OCI-LY7 (cell line): ENCODE measurements at regions of chr9 and their contacts with region 1.

Region 1: GRCh38 chr9:4740638-4741364 is at the start of gene AK3:
- DNase-seq: peak; percentile 94
- H3K4me3 ChIP-seq: peak within 1 kb of the TSS; percentile 86
- H3K27ac ChIP-seq: peak within 1 kb of the TSS; percentile 61
- H3K4me1 ChIP-seq: peaks cover 23% of the 10 kb centered on the region
- CTCF ChIP-seq: peak; percentile 49
- total RNA-seq, gene AK3: 64.4 and 108 TPM in 2 replicates

Region 2: DNA sequence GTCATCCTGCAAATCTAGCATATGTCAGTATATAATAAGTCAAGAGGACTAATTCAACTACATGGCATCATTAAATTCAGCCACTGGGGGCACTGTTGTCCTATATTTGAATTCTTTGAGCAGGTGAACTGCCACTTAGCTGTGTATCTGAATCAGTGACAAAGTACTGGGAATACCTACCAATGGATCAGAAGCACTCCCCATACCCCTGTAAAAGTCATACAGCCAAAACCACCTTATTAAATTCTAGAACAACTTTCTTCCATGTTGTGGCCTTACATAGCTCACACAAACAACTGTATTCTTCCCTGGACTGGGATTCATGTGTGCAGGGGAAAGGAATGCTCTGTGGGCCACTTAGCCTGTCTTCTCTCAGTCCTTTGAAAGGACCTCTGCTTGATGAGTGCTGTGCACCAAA is 136.1 kb before region 1 on chr9:
- CTCF ChIA-PET with region 1: no interaction called
- POLR2A ChIA-PET with region 1: no interaction called
- intact Hi-C with region 1: loop called (anchors 5 kb)
- DNase-seq: peak; percentile 76
- H3K4me3 ChIP-seq: no peak overlapping the region
- H3K27ac ChIP-seq: no peak overlapping the region
- H3K4me1 ChIP-seq: no peaks in the 10 kb centered on the region
- CTCF ChIP-seq: peak; percentile 92

Region 3: DNA sequence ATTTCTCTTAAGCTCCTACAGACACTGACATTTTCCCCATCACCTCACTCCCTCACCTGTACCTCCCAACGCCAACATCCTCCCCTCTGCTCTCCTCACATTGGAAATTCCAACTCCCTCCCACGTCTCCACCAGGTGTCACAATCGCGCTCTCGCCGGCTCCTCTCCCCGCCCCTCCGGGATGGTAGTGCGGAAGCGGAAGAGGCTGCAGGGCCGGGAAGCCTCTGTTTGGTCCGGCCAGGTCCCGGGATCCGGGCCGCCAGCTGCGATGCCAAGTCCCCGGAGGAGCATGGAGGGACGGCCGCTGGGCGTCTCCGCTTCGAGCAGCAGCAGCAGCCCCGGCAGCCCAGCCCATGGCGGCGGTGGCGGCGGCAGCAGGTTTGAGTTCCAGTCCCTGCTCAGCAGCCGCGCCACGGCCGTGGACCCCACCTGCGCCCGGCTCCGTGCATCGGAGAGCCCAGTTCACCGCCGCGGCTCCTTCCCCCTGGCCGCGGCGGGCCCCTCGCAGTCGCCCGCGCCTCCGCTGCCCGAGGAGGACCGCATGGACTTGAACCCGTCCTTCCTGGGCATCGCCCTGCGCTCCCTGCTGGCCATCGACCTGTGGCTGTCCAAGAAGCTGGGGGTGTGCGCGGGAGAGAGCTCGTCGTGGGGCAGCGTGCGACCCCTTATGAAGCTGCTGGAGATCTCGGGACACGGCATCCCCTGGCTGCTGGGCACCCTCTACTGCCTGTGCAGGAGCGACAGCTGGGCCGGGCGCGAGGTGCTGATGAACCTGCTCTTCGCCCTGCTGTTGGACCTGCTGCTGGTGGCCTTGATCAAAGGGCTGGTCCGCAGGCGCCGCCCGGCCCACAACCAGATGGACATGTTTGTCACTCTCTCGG is 78.5 kb before region 1 on chr9 and contains the start of gene PLPP6:
- CTCF ChIA-PET with region 1: no interaction called
- POLR2A ChIA-PET with region 1: interaction called, 3 read pairs
- intact Hi-C with region 1: loop called (anchors 1 kb)
- DNase-seq: peak; percentile 75
- H3K4me3 ChIP-seq: peak within 1 kb of the TSS; percentile 77
- H3K27ac ChIP-seq: no peak within 1 kb of the TSS
- H3K4me1 ChIP-seq: peaks cover 23% of the 10 kb centered on the region
- CTCF ChIP-seq: peak; percentile 66
- total RNA-seq, gene PLPP6: 2.5 and 4.6 TPM in 2 replicates

Region 4: GRCh38 chr9:4679268-4680172 is 61.3 kb before region 1 on chr9 and contains the start of gene CDC37L1:
- CTCF ChIA-PET with region 1: no interaction called
- POLR2A ChIA-PET with region 1: interaction called, 10 read pairs
- intact Hi-C with region 1: loop called (anchors 1 kb)
- DNase-seq: peak; percentile 96
- H3K4me3 ChIP-seq: peak within 1 kb of the TSS; percentile 90
- H3K27ac ChIP-seq: peak within 1 kb of the TSS; percentile 80
- H3K4me1 ChIP-seq: peaks cover 20% of the 10 kb centered on the region
- CTCF ChIP-seq: peak; percentile 65
- total RNA-seq, gene CDC37L1: 11.7 and 13.8 TPM in 2 replicates